Tibial artery (tissue), 4 donors: ENCODE measurements at regions of chr10 and their contacts with region 1.

Region 1: DNA sequence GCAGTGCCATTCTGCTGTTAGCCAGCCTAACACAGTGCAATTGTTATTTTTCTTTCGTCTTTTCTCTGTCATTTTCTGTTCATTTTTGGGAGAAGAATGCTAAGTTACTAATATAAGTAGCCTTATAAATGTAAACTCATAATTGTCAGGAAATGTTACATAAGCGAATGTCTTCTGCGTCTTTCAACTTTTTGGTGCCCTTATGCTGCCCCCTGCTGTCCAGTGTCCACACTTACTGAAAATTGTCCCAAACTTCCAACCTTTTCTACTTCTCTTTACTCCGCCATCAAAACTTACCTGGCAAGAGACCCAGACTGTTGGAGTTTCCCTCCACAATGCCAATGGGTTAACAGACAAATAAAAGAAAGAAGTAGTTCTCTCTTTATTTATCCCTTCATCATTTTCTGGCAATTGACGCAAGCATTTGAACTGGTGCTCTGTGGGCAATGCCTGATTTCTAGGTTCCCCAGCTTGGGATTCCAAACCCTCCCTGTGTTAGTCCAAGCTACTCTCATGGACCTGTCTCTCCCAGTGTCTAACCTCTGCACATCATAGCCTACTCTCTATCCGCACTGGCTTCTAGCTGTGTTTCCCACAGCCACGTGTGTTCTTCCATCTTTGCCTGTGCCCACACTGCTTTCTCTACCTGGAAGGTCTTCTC is 21.0 kb upstream of the EPC1 start:
- DNase-seq: peak; percentile 55 to 81
- H3K4me3 ChIP-seq: no peak overlapping the region
- H3K27ac ChIP-seq: peak overlapping the region in 1 of 2 donors; percentile 43
- H3K4me1 ChIP-seq: peaks cover 0 to 73% (median 20%) of the 10 kb centered on the region in 4 donors
- H3K27me3 ChIP-seq: no peaks in the 10 kb centered on the region
- CTCF ChIP-seq: peak; percentile 75 to 80

Region 2: GRCh38 chr10:31908157-31908556 is 459.8 kb before region 1 on chr10:
- intact Hi-C with region 1: no loop called
- DNase-seq: no peak
- H3K4me3 ChIP-seq: no peak overlapping the region
- H3K27ac ChIP-seq: peak overlapping the region in 1 of 2 donors; percentile 3
- H3K4me1 ChIP-seq: peaks cover 0 to 60% (median 11%) of the 10 kb centered on the region in 4 donors
- H3K27me3 ChIP-seq: no peaks in the 10 kb centered on the region
- CTCF ChIP-seq: no peak

Region 3: DNA sequence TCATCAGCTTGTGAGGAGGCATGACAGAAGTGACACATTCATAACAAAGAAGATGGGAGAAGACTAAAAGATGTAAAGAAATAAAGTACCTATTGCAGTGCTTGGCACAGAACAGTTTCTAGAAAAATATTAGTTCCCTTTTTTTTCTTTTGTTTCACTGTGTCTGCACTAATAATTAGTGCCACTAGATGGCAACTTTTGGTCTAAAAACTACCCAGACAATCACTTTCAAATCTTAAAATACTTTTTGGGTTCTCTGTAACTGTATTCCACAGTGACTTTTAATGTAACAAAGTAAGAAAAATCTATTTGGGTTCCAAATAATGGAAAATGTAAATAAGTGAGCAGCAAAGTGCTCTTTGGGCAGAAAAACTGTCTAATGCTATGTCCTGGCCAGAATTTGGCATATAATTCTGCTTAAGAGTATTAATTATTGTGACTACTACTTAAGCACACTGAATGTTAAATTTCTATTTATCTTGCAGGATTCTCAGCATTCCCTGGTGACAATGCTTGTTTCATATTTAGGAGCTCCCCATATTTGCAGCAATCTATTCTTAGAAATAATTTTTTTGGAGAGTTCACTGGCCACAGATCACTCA is 176.9 kb before region 1 on chr10:
- intact Hi-C with region 1: loop called (anchors 10 kb)
- DNase-seq: no peak
- H3K4me3 ChIP-seq: no peak overlapping the region
- H3K27ac ChIP-seq: no peak overlapping the region
- H3K4me1 ChIP-seq: peaks cover 0 to 4% (median 2%) of the 10 kb centered on the region in 4 donors
- H3K27me3 ChIP-seq: no peaks in the 10 kb centered on the region
- CTCF ChIP-seq: peak; percentile 68 to 77

Region 4: GRCh38 chr10:32256613-32257437 is 111.1 kb before region 1 on chr10:
- intact Hi-C with region 1: loop called (anchors 5 kb)
- DNase-seq: peak; percentile 60 to 76
- H3K4me3 ChIP-seq: no peak overlapping the region
- H3K27ac ChIP-seq: no peak overlapping the region
- H3K4me1 ChIP-seq: no peaks in the 10 kb centered on the region
- H3K27me3 ChIP-seq: no peaks in the 10 kb centered on the region
- CTCF ChIP-seq: peak; percentile 84 to 86